ENCODE measurements at regions of chr9 and their contacts with region 1.

Region 1: DNA sequence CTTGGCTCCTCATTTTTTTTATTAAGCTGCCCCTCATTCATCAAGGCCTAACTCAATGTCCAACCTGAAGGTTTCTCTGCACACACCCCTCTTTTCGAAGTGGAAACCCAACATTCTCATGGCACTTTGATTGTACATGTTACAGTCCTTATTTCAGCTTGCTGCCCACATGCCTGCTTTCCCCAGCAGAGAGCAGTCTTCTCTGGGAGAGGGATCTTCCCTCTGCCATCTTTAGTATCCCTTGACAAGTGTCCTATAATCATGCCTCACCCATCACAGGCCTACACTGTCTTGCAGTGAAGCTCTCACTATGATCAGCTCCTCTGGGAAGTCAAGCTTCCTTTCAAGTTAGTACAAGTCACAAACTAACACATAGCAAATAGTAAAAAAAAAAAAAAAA is 175.1 kb downstream of the ACER2 start:
- DNase-seq: no peak
- H3K4me3 Mint-ChIP-seq: no peak overlapping the region
- H3K27ac Mint-ChIP-seq: no peak overlapping the region
- H3K4me1 Mint-ChIP-seq: no peaks in the 10 kb centered on the region
- H3K27me3 Mint-ChIP-seq: peaks cover 57% of the 10 kb centered on the region
- CTCF ChIP-seq: no peak

Region 2: GRCh38 chr9:19146441-19147024 is 437.4 kb before region 1 on chr9:
- CTCF ChIA-PET with region 1: interaction called, 16 read pairs
- intact Hi-C with region 1: no loop called
- DNase-seq: no peak
- H3K4me3 Mint-ChIP-seq: no peak overlapping the region
- H3K27ac Mint-ChIP-seq: no peak overlapping the region
- H3K4me1 Mint-ChIP-seq: peaks cover 2% of the 10 kb centered on the region
- H3K27me3 Mint-ChIP-seq: no peaks in the 10 kb centered on the region
- CTCF ChIP-seq: no peak

Region 3: GRCh38 chr9:19641046-19641445 is 57.2 kb after region 1 on chr9:
- CTCF ChIA-PET with region 1: no interaction called
- intact Hi-C with region 1: no loop called
- DNase-seq: no peak
- H3K4me3 Mint-ChIP-seq: no peak overlapping the region
- H3K27ac Mint-ChIP-seq: no peak overlapping the region
- H3K4me1 Mint-ChIP-seq: no peaks in the 10 kb centered on the region
- H3K27me3 Mint-ChIP-seq: peaks cover 22% of the 10 kb centered on the region
- CTCF ChIP-seq: no peak